A549 (cell line): ENCODE measurements at regions of chr3 and their contacts with region 1.

Region 1: DNA sequence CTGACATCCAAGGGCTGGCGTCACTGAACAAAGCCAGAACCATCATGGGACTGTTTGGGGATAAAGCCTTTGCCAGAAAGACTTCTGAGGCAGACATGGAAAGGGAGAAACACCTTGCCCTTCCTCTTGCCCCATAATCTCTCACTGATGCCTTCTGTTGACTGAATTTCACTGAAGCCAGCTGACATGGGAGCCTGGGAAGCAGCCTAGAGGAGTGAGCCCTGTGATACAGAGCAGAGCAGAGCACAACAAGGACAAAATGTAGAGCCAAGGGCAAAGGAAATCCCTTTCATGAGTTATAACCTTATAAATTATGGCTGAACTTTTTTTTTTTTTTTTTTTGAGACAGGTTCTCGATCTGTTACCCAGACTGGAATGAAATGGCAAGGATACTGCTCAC is 9.8 kb upstream of the CNOT10 start:
- DNase-seq: no peak
- ATAC-seq: peak in 1 of 2 experiments; percentile 13; a peak in 1 of 6 replicates
- H3K4me3 ChIP-seq: no peak overlapping the region
- H3K27ac ChIP-seq: no peak overlapping the region
- H3K4me1 ChIP-seq: no peaks in the 10 kb centered on the region
- CTCF ChIP-seq: no peak
- EP300 ChIP-seq: no peak
- POLR2A ChIP-seq: no peak
- RAD21 ChIP-seq: no peak

Region 2: DNA sequence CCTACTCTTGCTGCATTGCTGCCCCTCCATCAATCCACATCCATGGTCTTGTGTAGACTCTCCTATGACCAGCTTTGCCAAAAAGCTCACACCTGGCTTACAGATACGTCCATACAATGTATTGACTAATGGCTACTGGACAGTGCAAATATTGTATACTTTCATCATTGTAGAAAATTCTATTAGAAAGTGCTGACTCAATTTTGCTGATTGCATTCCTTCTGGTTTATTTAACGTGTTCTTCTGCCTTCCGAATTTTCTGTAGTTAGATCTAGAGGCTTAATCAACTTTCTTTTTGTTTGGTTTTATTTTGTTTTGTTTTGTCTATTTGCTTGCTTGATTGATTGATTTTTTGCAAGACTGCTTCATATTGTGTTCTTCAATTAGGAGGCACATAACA is 20.0 kb before region 1 on chr3:
- CTCF ChIA-PET with region 1: no interaction called
- POLR2A ChIA-PET with region 1: interaction called, 11 read pairs
- DNase-seq: no peak
- ATAC-seq: no peak
- H3K4me3 ChIP-seq: no peak overlapping the region
- H3K27ac ChIP-seq: no peak overlapping the region
- H3K4me1 ChIP-seq: no peaks in the 10 kb centered on the region
- CTCF ChIP-seq: no peak
- EP300 ChIP-seq: no peak
- POLR2A ChIP-seq: no peak
- RAD21 ChIP-seq: no peak

Region 3: DNA sequence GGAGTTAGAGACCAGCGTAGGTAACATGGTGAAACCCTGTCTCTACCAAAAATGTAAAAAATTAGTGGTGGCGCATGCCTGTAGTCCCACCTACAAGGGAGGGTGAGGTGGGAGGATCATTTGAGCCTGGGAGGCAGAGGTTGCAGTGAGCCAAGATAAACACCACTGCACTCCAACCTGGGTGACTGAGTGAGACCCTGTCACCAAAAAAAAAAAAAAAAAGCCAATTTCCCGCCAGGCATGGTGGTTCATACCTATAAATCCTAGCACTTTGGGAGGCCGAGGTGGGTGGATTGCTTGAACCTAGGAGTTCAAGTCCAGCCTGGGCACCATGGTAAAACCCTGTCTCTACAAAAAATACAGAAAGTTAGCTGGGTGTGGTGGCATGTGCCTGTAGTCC is 16.7 kb after region 1 on chr3:
- CTCF ChIA-PET with region 1: no interaction called
- POLR2A ChIA-PET with region 1: no interaction called
- DNase-seq: no peak
- ATAC-seq: no peak
- H3K4me3 ChIP-seq: no peak overlapping the region
- H3K27ac ChIP-seq: no peak overlapping the region
- H3K4me1 ChIP-seq: peaks cover 2% of the 10 kb centered on the region; the same call in 2 of the 3 replicates
- CTCF ChIP-seq: no peak
- EP300 ChIP-seq: no peak
- POLR2A ChIP-seq: no peak
- RAD21 ChIP-seq: no peak